ENCODE measurements at regions of chr11 and their contacts with region 1.

Region 1: DNA sequence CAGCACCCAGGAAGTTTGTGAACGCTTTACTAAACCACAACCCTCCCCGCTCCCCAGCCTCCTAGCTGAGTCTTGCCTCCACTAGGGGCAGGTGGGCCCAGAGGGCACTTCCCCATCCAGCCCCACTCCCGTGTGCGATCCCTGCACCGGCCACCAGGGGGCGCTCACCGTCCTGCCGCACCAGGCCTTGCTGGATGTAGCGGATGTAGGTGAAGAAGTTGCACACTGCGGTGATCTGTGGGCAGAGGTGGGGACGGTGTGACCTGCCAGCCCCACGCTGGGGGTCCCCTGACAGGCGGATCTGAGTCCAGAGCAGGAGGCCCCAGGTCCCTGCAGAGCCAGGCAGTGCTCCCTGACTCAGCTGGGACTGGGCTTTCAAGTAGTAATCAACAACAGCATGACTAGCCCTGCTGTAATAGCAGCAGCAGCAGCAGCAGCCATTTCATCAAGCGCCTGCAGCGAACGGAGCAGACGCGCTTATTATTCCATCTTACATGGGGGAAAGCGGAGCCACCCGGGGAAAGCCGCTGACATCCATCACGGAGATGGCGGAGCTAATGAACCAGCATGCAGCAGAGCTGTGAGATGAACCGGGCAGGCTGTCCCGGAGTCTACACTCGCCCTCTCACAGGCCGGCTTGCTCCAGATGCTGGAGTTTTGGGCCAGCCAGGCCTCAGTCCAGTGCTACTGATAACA is 7.9 kb upstream of the FADS3 start:
- DNase-seq: peak; percentile 80
- H3K4me3 ChIP-seq: no peak overlapping the region
- H3K27ac ChIP-seq: no peak overlapping the region
- H3K4me1 ChIP-seq: no peaks in the 10 kb centered on the region
- H3K27me3 ChIP-seq: no peaks in the 10 kb centered on the region
- CTCF ChIP-seq: peak; percentile 100
- POLR2A ChIP-seq: no peak

Region 2: DNA sequence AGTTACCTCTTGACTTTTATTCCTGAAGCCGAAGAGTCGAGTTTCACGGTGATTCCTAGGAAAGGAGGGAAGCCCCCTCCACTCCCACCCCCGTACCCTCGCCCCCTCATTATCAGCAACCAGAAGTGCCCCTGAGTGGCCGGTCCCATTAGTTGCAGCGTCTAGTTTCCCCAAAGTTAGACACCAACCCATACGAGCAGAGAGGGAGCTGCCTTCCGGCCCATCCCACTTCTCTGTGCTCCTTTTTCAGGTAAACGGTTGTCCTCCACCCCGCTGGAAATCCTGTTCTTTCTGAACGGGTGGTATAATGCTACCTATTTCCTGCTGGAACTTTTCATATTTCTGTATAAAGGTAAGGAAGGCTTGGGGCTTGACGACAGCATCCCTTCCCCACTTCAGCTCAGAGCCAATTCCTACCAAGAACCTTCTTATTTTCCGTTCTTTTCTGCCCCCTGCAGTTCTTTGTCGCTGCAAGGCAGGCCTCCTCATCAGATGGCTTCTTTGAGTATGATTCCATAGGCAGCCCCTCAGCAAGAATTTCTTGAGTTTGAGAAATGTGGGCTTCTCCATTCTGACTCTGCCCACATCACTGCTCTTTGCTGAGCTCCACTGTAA is 506.2 kb before region 1 on chr11:
- CTCF ChIA-PET with region 1: no interaction called
- POLR2A ChIA-PET with region 1: no interaction called
- dilution Hi-C with region 1: no loop called
- intact Hi-C with region 1: no loop called
- DNase-seq: peak; percentile 36
- H3K4me3 ChIP-seq: peak overlapping the region; percentile 71 to 77 (median 71)
- H3K27ac ChIP-seq: no peak overlapping the region
- H3K4me1 ChIP-seq: peaks cover 11% of the 10 kb centered on the region
- H3K27me3 ChIP-seq: no peaks in the 10 kb centered on the region
- CTCF ChIP-seq: peak; percentile 8 to 16
- POLR2A ChIP-seq: no peak

Region 3: GRCh38 chr11:61916737-61917340 is 17.5 kb after region 1 on chr11:
- CTCF ChIA-PET with region 1: interaction called, 11 read pairs
- POLR2A ChIA-PET with region 1: no interaction called
- dilution Hi-C with region 1: no loop called
- intact Hi-C with region 1: no loop called
- DNase-seq: no peak
- H3K4me3 ChIP-seq: peak overlapping the region in 1 of 3 experiments; percentile 22
- H3K27ac ChIP-seq: no peak overlapping the region
- H3K4me1 ChIP-seq: no peaks in the 10 kb centered on the region
- H3K27me3 ChIP-seq: peaks cover 11 to 22% of the 10 kb centered on the region in 2 experiments
- CTCF ChIP-seq: no peak
- POLR2A ChIP-seq: no peak

Region 4: DNA sequence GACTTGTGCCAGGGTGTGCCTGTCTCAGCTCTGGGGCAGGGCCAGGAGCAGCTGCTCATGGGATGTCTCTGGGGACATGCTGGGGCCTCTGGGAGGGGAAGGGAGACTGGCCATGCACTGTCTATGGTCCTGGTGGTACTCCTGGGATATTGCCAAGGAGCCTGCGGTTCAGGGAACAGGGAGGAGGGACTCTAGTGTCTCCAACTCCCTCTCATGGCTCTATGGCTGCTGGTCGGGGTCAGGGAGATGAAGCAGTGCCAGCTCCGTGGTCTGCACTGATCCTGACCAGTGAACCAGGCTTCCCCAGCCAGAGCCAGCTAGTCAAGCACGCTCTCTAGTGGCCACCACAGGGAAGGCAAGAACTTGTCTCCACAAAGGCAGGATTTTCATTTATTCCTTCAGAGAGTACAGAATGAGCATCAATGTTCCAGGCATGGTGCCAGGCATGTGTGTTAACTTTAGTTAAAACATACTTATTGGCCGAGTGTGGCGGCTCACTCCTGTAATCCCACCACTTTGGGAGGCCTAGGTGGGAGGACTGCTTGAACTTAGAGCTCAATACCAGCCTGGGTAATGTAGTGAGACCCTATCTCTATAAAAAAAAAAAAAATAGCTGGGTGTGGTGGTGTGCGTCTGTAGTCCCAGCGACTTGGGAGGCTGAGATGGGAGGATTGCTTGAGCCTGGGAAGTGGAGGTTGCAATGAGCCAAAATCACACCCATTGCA is 48.4 kb after region 1 on chr11:
- CTCF ChIA-PET with region 1: interaction called, 276 read pairs
- POLR2A ChIA-PET with region 1: no interaction called
- dilution Hi-C with region 1: no loop called
- intact Hi-C with region 1: loop called (anchors 1 kb)
- DNase-seq: peak; percentile 84
- H3K4me3 ChIP-seq: no peak overlapping the region
- H3K27ac ChIP-seq: no peak overlapping the region
- H3K4me1 ChIP-seq: no peaks in the 10 kb centered on the region
- H3K27me3 ChIP-seq: peaks cover 2% of the 10 kb centered on the region in 2 experiments
- CTCF ChIP-seq: peak; percentile 92 to 94
- POLR2A ChIP-seq: no peak

Region 5: DNA sequence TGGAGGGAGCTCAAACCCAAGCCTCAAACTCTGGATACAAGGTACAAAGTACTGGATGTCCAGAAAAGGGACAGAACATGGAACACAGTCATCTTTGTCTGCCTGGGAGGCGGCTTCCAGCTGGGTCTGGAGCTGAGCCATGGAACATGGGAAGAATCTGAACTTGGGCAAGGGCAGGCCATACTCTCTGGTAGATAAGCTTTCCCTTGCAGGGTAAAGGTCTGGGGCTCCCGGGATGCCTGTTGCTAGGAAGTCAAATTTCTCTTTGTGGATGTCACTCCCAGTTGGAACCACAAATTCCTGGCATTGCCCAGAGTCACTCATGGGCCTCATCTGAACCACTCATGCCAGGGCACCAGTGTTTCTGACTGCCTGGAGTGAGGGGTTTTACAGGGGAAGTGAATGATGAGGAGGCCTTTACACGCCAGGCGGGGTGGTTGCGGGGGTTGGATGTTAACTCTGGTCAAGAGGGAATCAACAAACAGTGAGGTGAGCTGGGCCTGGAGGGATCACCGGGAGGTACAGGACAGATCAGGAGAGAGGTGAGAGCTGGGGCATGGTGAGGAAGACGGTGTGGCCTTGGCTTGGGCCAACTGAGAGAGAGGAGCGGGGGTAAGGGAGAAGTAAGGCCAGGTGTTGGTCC is 62.4 kb after region 1 on chr11:
- CTCF ChIA-PET with region 1: interaction called, 23 read pairs
- POLR2A ChIA-PET with region 1: no interaction called
- dilution Hi-C with region 1: no loop called
- intact Hi-C with region 1: no loop called
- DNase-seq: no peak
- H3K4me3 ChIP-seq: no peak overlapping the region
- H3K27ac ChIP-seq: no peak overlapping the region
- H3K4me1 ChIP-seq: peaks cover 24% of the 10 kb centered on the region
- H3K27me3 ChIP-seq: no peaks in the 10 kb centered on the region
- CTCF ChIP-seq: no peak
- POLR2A ChIP-seq: no peak

Region 6: GRCh38 chr11:62157603-62158002 is 258.3 kb after region 1 on chr11:
- CTCF ChIA-PET with region 1: no interaction called
- POLR2A ChIA-PET with region 1: no interaction called
- dilution Hi-C with region 1: no loop called
- intact Hi-C with region 1: no loop called
- DNase-seq: peak; percentile 31
- H3K4me3 ChIP-seq: no peak overlapping the region
- H3K27ac ChIP-seq: no peak overlapping the region
- H3K4me1 ChIP-seq: peaks cover 11% of the 10 kb centered on the region
- H3K27me3 ChIP-seq: peaks cover 0 to 3% of the 10 kb centered on the region in 2 experiments
- CTCF ChIP-seq: no peak
- POLR2A ChIP-seq: no peak

Region 7: DNA sequence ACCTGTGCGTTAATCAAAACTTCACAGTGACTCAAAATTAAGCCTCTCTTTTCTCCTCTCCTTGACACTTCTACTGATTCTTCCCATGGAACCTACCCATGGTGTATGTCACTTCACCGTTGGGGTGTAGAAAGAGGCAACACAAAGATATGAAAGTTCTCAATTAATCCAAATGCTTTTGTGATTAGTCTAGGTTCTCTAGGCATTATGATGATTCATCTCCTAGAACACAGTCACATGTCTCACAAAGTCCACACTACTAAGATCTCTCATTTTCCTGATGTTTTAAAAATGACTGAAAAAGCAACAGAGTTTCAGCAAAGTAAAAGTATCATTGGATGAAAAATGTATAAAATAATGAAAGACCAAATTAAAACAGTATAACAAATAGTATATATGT is 357.0 kb after region 1 on chr11:
- CTCF ChIA-PET with region 1: no interaction called
- POLR2A ChIA-PET with region 1: no interaction called
- dilution Hi-C with region 1: no loop called
- intact Hi-C with region 1: no loop called
- DNase-seq: no peak
- H3K4me3 ChIP-seq: no peak overlapping the region
- H3K27ac ChIP-seq: no peak overlapping the region
- H3K4me1 ChIP-seq: no peaks in the 10 kb centered on the region
- H3K27me3 ChIP-seq: peaks cover 2 to 15% of the 10 kb centered on the region in 2 experiments
- CTCF ChIP-seq: no peak
- POLR2A ChIP-seq: no peak